ENCODE measurements at regions of chr10 and their contacts with region 1.

Region 1: DNA sequence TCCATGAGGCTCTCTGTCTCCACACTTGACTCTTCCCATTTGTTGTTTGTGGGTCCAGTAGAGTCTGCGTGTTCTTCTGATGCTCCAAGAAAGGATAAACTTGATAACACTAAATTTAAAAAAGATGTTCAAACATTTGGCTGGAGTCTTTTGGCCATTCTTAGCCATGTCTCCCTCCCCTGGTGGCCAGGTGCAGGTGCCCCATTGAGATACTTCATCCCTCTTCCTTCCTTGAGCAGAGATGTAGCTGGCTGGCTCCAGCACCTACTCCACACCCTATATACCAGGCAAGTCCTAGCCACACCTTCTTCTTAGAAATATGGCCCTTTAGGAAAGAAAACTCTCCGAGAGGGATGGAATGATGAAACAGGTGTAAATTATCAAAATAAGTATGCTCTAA is 103.2 kb upstream of the GJD4 start:
- DNase-seq: no peak
- ATAC-seq: no peak
- H3K4me3 ChIP-seq: no peak overlapping the region
- H3K4me3 Mint-ChIP-seq: no peak overlapping the region
- H3K27ac ChIP-seq: no peak overlapping the region
- H3K27ac Mint-ChIP-seq: no peak overlapping the region
- H3K4me1 ChIP-seq: peaks cover 3% of the 10 kb centered on the region
- H3K4me1 Mint-ChIP-seq: peaks cover 45% of the 10 kb centered on the region
- H3K27me3 ChIP-seq: no peaks in the 10 kb centered on the region
- H3K27me3 Mint-ChIP-seq: no peaks in the 10 kb centered on the region
- CTCF ChIP-seq: no peak

Region 2: GRCh38 chr10:35246770-35247343 is 255.1 kb before region 1 on chr10:
- CTCF ChIA-PET with region 1: no interaction called
- POLR2A ChIA-PET with region 1: no interaction called
- intact Hi-C with region 1: loop called in 1 of 2 experiments (anchors 5 kb)
- DNase-seq: no peak
- ATAC-seq: no peak
- H3K4me3 ChIP-seq: no peak overlapping the region
- H3K4me3 Mint-ChIP-seq: no peak overlapping the region
- H3K27ac ChIP-seq: no peak overlapping the region
- H3K27ac Mint-ChIP-seq: no peak overlapping the region
- H3K4me1 ChIP-seq: no peaks in the 10 kb centered on the region
- H3K4me1 Mint-ChIP-seq: no peaks in the 10 kb centered on the region
- H3K27me3 ChIP-seq: no peaks in the 10 kb centered on the region
- H3K27me3 Mint-ChIP-seq: peaks cover 9% of the 10 kb centered on the region
- CTCF ChIP-seq: no peak